Stomach (tissue), 19 donors: ENCODE measurements at regions of chr17 and their contacts with region 1.

Region 1: GRCh38 chr17:81401723-81402529 is 6.7 kb downstream of the BAHCC1 start:
- DNase-seq: peak in 1 of 2 donors; percentile 71
- H3K4me3 ChIP-seq: peak overlapping the region in 2 of 4 donors; percentile 71 to 78
- H3K27ac ChIP-seq: peak overlapping the region; percentile 37 to 99 (median 95)
- H3K4me1 ChIP-seq: peaks cover 48 to 84% (median 68%) of the 10 kb centered on the region in 4 donors
- H3K27me3 ChIP-seq: peaks cover 0 to 38% (median 10%) of the 10 kb centered on the region in 3 donors
- CTCF ChIP-seq: peak in 1 of 7 experiments; percentile 15
- EP300 ChIP-seq: no peak
- POLR2A ChIP-seq: no peak

Region 2: GRCh38 chr17:81339534-81340296 is 62.2 kb before region 1 on chr17:
- intact Hi-C with region 1: loop called (anchors 5 kb)
- DNase-seq: peak in 1 of 2 donors; percentile 87
- H3K4me3 ChIP-seq: peak overlapping the region in 1 of 4 donors; percentile 81
- H3K27ac ChIP-seq: peak overlapping the region; percentile 31 to 98 (median 98)
- H3K4me1 ChIP-seq: peaks cover 53 to 86% (median 78%) of the 10 kb centered on the region in 4 donors
- H3K27me3 ChIP-seq: peaks cover 0 to 44% (median 21%) of the 10 kb centered on the region in 3 donors
- CTCF ChIP-seq: no peak
- EP300 ChIP-seq: no peak
- POLR2A ChIP-seq: no peak

Region 3: GRCh38 chr17:81593105-81593871 is 191.4 kb after region 1 on chr17:
- intact Hi-C with region 1: no loop called
- DNase-seq: no peak
- H3K4me3 ChIP-seq: no peak overlapping the region
- H3K27ac ChIP-seq: no peak overlapping the region
- H3K4me1 ChIP-seq: no peaks in the 10 kb centered on the region
- H3K27me3 ChIP-seq: no peaks in the 10 kb centered on the region
- CTCF ChIP-seq: no peak
- EP300 ChIP-seq: no peak
- POLR2A ChIP-seq: no peak